CD4-positive, alpha-beta memory T cell (primary cell): ENCODE measurements at regions of chr16 and their contacts with region 1.

Region 1: GRCh38 chr16:30922960-30923535 is 324 bp upstream of the FBXL19 start:
- DNase-seq: peak; percentile 95 to 98 (median 97)
- H3K4me3 ChIP-seq: peak overlapping the region; percentile 73 to 92
- H3K4me3 Mint-ChIP-seq: peak overlapping the region; percentile 95 to 100 (median 99)
- H3K27ac ChIP-seq: peak overlapping the region; percentile 90
- H3K27ac Mint-ChIP-seq: peak overlapping the region; percentile 98 to 100 (median 99)
- H3K4me1 ChIP-seq: peaks cover 12% of the 10 kb centered on the region
- H3K4me1 Mint-ChIP-seq: peaks cover 7 to 33% (median 17%) of the 10 kb centered on the region in 4 donors
- H3K27me3 ChIP-seq: no peaks in the 10 kb centered on the region
- H3K27me3 Mint-ChIP-seq: no peaks in the 10 kb centered on the region

Region 2: GRCh38 chr16:30650369-30651123 is 272.5 kb before region 1 on chr16 and contains the start of gene PRR14:
- CTCF ChIA-PET with region 1: no interaction called
- POLR2A ChIA-PET with region 1: interaction called, 3 read pairs
- intact Hi-C with region 1: loop called (anchors 1 kb)
- DNase-seq: peak; percentile 96 to 99 (median 97)
- H3K4me3 ChIP-seq: peak within 1 kb of the TSS; percentile 99
- H3K4me3 Mint-ChIP-seq: peak within 1 kb of the TSS; percentile 95 to 100 (median 99)
- H3K27ac ChIP-seq: peak within 1 kb of the TSS; percentile 96
- H3K27ac Mint-ChIP-seq: peak within 1 kb of the TSS; percentile 97 to 100 (median 99)
- H3K4me1 ChIP-seq: peaks cover 20% of the 10 kb centered on the region
- H3K4me1 Mint-ChIP-seq: peaks cover 11 to 32% (median 18%) of the 10 kb centered on the region in 4 donors
- H3K27me3 ChIP-seq: no peaks in the 10 kb centered on the region
- H3K27me3 Mint-ChIP-seq: peaks cover 0 to 2% of the 10 kb centered on the region in 2 donors
- total RNA-seq, gene PRR14: 92.0 to 100 TPM

Region 3: GRCh38 chr16:30761928-30762810 is 160.9 kb before region 1 on chr16 and contains the starts of genes CFAP119 and RNF40:
- CTCF ChIA-PET with region 1: no interaction called
- POLR2A ChIA-PET with region 1: no interaction called
- intact Hi-C with region 1: loop called (anchors 1 kb)
- DNase-seq: peak; percentile 89 to 94 (median 91)
- H3K4me3 ChIP-seq: peak within 1 kb of the TSS; percentile 73 to 97
- H3K4me3 Mint-ChIP-seq: peak within 1 kb of the TSS; percentile 94 to 98 (median 97)
- H3K27ac ChIP-seq: peak within 1 kb of the TSS; percentile 71
- H3K27ac Mint-ChIP-seq: peak within 1 kb of the TSS; percentile 94 to 97 (median 96)
- H3K4me1 ChIP-seq: peaks cover 30% of the 10 kb centered on the region
- H3K4me1 Mint-ChIP-seq: peaks cover 11 to 38% (median 27%) of the 10 kb centered on the region in 4 donors
- H3K27me3 ChIP-seq: no peaks in the 10 kb centered on the region
- H3K27me3 Mint-ChIP-seq: no peaks in the 10 kb centered on the region
- total RNA-seq, gene CFAP119: 2.6 to 3.4 TPM
- total RNA-seq, gene RNF40: 101 to 109 TPM

Region 4: DNA sequence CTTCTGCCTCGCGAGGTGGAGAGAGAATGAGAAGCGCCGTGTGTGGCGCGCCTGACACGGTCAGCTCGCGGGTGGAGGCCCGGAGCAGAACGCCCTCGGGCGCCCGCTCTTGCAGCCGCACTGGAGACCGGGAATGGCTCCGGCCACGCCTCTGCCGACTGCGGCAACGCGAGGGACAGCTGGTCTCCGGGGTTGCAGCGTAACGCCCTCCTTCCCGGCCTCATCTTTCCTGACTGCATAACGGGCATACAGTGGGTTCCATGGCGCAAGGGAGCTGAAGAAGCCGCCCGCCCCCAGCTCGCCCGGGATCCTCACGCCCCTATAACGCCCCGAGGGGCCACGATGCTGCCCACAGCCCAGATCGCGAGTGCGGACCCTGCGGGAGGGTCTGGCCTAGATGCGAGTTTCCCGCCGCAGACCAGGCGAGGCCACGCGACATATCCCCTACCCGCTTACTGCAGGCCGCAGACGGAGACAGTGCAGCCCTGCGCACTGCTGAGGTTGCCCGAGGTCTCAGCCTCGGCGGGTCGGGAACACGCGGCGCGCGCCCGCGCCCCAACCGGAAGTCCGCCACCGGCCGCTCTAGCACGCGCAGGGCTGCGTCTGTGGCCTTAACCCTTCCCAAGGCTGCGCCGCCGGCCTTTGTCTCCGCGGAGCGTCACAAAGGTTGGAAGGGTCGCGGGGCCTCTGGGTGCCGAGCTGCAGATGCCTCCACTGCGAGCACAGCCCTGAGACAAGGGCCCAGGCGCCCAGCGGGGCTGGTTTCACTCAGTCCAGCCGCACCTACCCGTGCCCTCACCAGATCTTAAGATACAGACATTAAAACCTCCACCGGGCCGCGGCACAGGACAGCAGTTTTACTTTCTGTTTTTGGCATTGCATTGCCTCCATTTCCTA is 48.0 kb before region 1 on chr16:
- CTCF ChIA-PET with region 1: no interaction called
- POLR2A ChIA-PET with region 1: interaction called, 10 read pairs
- intact Hi-C with region 1: loop called (anchors 1 kb)
- DNase-seq: peak; percentile 85 to 89 (median 87)
- H3K4me3 ChIP-seq: peak overlapping the region; percentile 89 to 94
- H3K4me3 Mint-ChIP-seq: peak overlapping the region; percentile 92 to 99 (median 97)
- H3K27ac ChIP-seq: peak overlapping the region; percentile 84
- H3K27ac Mint-ChIP-seq: peak overlapping the region; percentile 91 to 99 (median 94)
- H3K4me1 ChIP-seq: peaks cover 23% of the 10 kb centered on the region
- H3K4me1 Mint-ChIP-seq: peaks cover 16 to 50% (median 31%) of the 10 kb centered on the region in 4 donors
- H3K27me3 ChIP-seq: no peaks in the 10 kb centered on the region
- H3K27me3 Mint-ChIP-seq: no peaks in the 10 kb centered on the region

Region 5: DNA sequence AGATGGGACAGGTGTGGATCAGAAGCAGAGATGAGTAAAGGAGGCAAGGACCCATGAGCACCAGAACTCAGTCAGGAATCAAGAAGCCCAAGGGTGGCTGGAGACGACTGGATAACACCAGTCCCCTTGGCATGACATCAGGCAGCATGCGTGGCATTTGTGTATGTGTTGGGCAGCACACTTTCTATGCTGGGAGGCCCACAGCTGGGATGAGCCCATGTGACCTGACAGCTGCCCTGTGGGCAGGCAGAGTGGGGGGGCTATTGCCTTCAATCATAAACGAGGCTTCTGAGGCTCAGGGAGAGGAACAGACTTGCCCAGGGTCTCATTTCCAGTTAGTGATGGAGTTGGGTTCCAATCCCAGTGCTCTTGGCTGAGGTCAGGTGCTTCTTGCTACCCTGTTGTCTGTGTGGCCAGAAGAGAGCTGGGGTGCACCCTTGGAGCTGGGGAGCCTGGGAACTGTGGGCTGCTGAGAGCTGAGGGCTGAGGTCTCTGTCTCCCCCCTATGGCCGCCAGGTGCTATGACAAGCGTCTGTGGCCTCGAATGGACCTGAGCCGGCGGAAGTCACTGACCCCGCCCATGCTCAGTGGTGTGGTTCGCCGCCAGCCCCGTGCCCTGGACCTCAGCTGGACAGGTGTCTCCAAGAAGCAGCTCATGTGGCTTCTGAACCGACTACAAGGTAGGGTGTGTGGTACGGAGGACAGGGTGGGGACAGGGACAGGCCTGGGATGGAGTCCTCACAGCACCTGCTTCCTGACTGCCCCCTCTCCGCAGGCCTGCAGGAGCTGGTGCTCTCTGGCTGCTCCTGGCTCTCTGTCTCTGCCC is 18.8 kb after region 1 on chr16:
- CTCF ChIA-PET with region 1: interaction called, 9 read pairs
- POLR2A ChIA-PET with region 1: interaction called, 8 read pairs
- intact Hi-C with region 1: loop called (anchors 2 kb)
- DNase-seq: peak; percentile 46 to 60 (median 59)
- H3K4me3 ChIP-seq: peak overlapping the region in 1 of 2 donors; percentile 22
- H3K4me3 Mint-ChIP-seq: peak overlapping the region in 3 of 8 donors; percentile 15 to 29 (median 29)
- H3K27ac ChIP-seq: no peak overlapping the region
- H3K27ac Mint-ChIP-seq: peak overlapping the region in 4 of 7 donors; percentile 5 to 78 (median 49)
- H3K4me1 ChIP-seq: peaks cover 9% of the 10 kb centered on the region
- H3K4me1 Mint-ChIP-seq: peaks cover 9 to 24% (median 21%) of the 10 kb centered on the region in 4 donors
- H3K27me3 ChIP-seq: no peaks in the 10 kb centered on the region
- H3K27me3 Mint-ChIP-seq: no peaks in the 10 kb centered on the region

Region 6: DNA sequence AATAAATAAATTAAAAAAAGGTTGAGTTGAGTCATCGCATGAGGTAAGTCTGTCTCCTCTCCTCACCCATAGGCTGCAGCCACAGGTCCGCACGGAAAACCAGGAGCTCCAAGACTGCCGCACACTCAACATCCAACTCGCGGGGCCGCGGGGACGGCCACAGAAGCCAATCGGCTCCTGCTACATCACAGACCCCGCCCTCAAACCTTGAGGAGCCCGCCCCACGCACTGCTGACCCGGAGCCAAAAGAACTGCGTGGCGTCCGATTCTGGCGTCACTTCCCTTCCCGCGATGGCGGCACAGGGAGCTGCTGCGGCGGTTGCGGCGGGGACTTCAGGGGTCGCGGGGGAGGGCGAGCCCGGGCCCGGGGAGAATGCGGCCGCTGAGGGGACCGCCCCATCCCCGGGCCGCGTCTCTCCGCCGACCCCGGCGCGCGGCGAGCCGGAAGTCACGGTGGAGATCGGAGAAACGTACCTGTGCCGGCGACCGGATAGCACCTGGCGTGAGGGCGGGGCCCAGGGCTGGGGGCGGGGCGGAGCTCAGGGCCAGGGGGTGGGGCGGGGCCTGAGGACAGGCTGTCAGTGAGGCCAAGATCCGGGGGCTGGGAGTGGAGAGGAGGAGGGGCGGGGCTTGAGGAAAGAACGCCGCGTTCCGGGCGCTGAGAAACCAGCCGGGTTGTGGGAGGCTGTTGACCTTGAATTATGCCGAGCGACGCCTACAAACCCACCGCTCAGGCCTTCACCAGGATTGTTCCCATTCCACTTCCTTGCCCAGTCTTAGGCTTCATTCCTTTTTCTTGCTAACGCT is 194.5 kb after region 1 on chr16 and contains the start of gene KAT8:
- CTCF ChIA-PET with region 1: no interaction called
- POLR2A ChIA-PET with region 1: interaction called, 7 read pairs
- intact Hi-C with region 1: loop called (anchors 1 kb)
- DNase-seq: peak; percentile 98 to 99 (median 98)
- H3K4me3 ChIP-seq: peak within 1 kb of the TSS; percentile 63 to 76
- H3K4me3 Mint-ChIP-seq: peak within 1 kb of the TSS; percentile 83 to 93 (median 89)
- H3K27ac ChIP-seq: peak within 1 kb of the TSS; percentile 89
- H3K27ac Mint-ChIP-seq: peak within 1 kb of the TSS; percentile 80 to 98 (median 95)
- H3K4me1 ChIP-seq: peaks cover 11% of the 10 kb centered on the region
- H3K4me1 Mint-ChIP-seq: peaks cover 9 to 19% (median 13%) of the 10 kb centered on the region in 4 donors
- H3K27me3 ChIP-seq: no peaks in the 10 kb centered on the region
- H3K27me3 Mint-ChIP-seq: no peaks in the 10 kb centered on the region
- total RNA-seq, gene KAT8: 90.8 to 94.2 TPM